Calu3 (cell line): ENCODE measurements at regions of chr3 and their contacts with region 1.

Region 1: DNA sequence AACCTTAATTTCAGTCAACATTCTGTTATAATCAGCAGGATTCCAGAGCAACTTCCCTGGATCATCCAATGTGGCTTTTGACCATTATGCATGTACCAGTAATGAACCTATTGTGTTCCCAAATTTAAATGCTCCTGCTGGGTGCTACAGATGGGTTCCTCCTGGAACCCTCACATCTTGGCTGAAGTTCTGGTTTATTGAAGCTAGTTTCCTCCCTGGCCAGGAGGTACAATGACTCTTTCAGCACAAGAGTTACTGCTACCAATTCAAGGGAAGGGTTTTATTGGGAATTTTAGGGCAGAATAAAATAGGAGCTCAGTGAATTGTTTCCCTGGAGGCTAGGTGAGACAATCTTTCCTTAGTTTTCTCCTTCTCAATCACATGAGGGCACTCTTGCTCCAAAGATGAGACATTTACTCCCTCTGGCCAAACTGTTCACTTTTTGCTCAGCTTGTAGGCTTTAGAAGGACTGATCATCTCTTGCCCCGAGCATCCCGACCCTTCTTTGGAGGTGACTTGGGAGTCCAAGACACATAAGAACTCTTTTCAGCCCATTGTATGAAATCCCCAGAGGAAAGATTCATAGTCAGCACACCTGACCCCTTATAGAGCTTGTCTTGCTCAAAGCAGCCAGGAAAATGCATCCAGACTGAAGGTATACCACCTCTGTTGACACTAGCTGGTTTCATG is 8.8 kb upstream of the NPHP3 start:
- DNase-seq: peak; percentile 48
- H3K4me3 Mint-ChIP-seq: no peak overlapping the region
- H3K27ac Mint-ChIP-seq: no peak overlapping the region
- H3K4me1 Mint-ChIP-seq: no peaks in the 10 kb centered on the region
- H3K27me3 Mint-ChIP-seq: peaks cover 65% of the 10 kb centered on the region
- CTCF ChIP-seq: peak; percentile 52

Region 2: GRCh38 chr3:132703733-132704132 is 27.3 kb before region 1 on chr3:
- CTCF ChIA-PET with region 1: no interaction called
- intact Hi-C with region 1: no loop called
- DNase-seq: no peak
- H3K4me3 Mint-ChIP-seq: no peak overlapping the region
- H3K27ac Mint-ChIP-seq: no peak overlapping the region
- H3K4me1 Mint-ChIP-seq: no peaks in the 10 kb centered on the region
- H3K27me3 Mint-ChIP-seq: no peaks in the 10 kb centered on the region
- CTCF ChIP-seq: no peak

Region 3: GRCh38 chr3:132800958-132801357 is 69.9 kb after region 1 on chr3:
- CTCF ChIA-PET with region 1: no interaction called
- intact Hi-C with region 1: no loop called
- DNase-seq: no peak
- H3K4me3 Mint-ChIP-seq: no peak overlapping the region
- H3K27ac Mint-ChIP-seq: no peak overlapping the region
- H3K4me1 Mint-ChIP-seq: no peaks in the 10 kb centered on the region
- H3K27me3 Mint-ChIP-seq: peaks cover 9% of the 10 kb centered on the region
- CTCF ChIP-seq: no peak

Region 4: GRCh38 chr3:133426721-133427120 is 695.7 kb after region 1 on chr3:
- CTCF ChIA-PET with region 1: interaction called, 16 read pairs
- intact Hi-C with region 1: loop called (anchors 1 kb)
- DNase-seq: no peak
- H3K4me3 Mint-ChIP-seq: no peak overlapping the region
- H3K27ac Mint-ChIP-seq: no peak overlapping the region
- H3K4me1 Mint-ChIP-seq: no peaks in the 10 kb centered on the region
- H3K27me3 Mint-ChIP-seq: peaks cover 68% of the 10 kb centered on the region
- CTCF ChIP-seq: no peak

Region 5: GRCh38 chr3:133588784-133589465 is 857.9 kb after region 1 on chr3:
- CTCF ChIA-PET with region 1: no interaction called
- intact Hi-C with region 1: loop called (anchors 5 kb)
- DNase-seq: no peak
- H3K4me3 Mint-ChIP-seq: no peak overlapping the region
- H3K27ac Mint-ChIP-seq: peak overlapping the region; percentile 44
- H3K4me1 Mint-ChIP-seq: peaks cover 49% of the 10 kb centered on the region
- H3K27me3 Mint-ChIP-seq: no peaks in the 10 kb centered on the region
- CTCF ChIP-seq: no peak

Region 6: DNA sequence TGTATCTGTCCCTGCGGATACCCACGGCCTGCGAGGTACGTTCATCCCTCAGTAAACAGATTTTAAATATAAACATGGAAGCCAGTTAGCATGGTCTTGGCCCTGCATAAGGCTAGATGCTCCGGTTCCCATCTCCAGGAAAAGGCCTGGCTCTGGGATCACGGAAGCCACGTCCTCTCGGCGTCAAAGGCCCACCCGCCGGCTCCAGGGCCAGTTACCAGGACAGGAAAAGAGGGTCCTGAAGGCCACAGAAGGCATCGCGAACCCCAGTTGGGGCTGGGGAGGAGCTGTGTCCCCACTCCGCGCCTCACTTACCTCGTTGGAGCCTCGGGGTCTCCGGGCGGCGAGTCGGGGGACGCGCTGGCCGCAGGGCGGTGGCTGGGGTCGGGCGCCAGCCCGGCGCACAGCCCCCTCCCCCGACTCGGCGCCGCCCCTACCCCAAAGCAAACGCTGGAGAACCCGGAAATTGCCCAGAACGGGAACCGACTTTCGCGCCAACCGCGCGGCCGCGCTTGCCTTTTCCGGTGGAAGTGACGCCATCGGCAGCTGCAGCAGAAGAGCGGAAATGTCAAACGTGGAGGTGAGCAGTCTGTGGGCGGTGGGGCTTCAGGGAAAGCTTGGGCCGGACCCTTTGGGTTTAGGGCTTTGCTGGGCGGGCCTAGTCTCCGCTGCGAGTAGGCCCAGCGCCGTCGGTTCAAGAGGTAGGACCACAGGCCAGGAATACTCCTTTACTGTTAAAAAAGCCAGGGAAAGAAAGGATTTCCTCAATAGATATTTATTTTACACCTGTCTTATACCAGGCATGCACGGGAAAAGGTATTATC is 930.6 kb after region 1 on chr3 and contains the start of gene TOPBP1:
- CTCF ChIA-PET with region 1: no interaction called
- intact Hi-C with region 1: loop called (anchors 10 kb)
- DNase-seq: peak; percentile 91
- H3K4me3 Mint-ChIP-seq: peak within 1 kb of the TSS; percentile 82
- H3K27ac Mint-ChIP-seq: peak within 1 kb of the TSS; percentile 59
- H3K4me1 Mint-ChIP-seq: peaks cover 32% of the 10 kb centered on the region
- H3K27me3 Mint-ChIP-seq: no peaks in the 10 kb centered on the region
- CTCF ChIP-seq: no peak
- total RNA-seq, gene TOPBP1: 86.6 and 94.7 TPM in 2 replicates

Region 7: GRCh38 chr3:133805527-133806475 is 1074.8 kb after region 1 on chr3 and contains the start of gene SRPRB:
- CTCF ChIA-PET with region 1: no interaction called
- intact Hi-C with region 1: loop called (anchors 10 kb)
- DNase-seq: peak; percentile 98
- H3K4me3 Mint-ChIP-seq: peak within 1 kb of the TSS; percentile 98
- H3K27ac Mint-ChIP-seq: peak within 1 kb of the TSS; percentile 80
- H3K4me1 Mint-ChIP-seq: peaks cover 7% of the 10 kb centered on the region
- H3K27me3 Mint-ChIP-seq: peaks cover 19% of the 10 kb centered on the region
- CTCF ChIP-seq: no peak
- total RNA-seq, gene SRPRB: 113 and 115 TPM in 2 replicates